ENCODE measurements at regions of chr16 and their contacts with region 1.

Region 1: DNA sequence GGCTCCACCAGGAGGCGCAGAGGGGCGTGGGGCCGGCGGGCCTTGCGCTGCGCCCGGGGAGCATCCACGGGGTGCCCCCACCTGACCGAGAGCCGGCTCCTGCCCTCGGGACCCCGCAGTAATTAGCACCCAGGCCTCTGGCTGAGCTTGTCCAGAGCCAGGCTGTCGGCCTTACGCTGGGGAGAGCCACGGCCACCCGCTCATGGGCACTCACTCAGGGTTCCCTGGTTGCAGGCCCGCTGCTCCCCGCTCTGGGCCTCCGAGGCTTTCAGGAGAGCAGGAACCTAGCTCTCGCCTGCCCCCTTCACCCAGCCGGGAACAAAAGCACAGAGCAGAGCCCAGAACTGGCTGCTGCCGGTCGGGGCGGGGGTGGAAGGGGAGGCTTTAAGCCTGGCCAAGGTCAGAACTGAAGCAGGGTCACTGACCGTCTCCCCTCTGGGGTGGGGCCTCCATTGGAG is 12.2 kb downstream of the GLIS2 start:
- DNase-seq: peak; percentile 78 to 92
- H3K4me3 ChIP-seq: peak overlapping the region; percentile 48 to 58
- H3K27ac ChIP-seq: peak overlapping the region; percentile 76 to 99
- H3K4me1 ChIP-seq: peaks cover 8 to 79% (median 69%) of the 10 kb centered on the region in 4 donors
- H3K27me3 ChIP-seq: no peaks in the 10 kb centered on the region
- CTCF ChIP-seq: peak; percentile 67 to 69

Region 2: DNA sequence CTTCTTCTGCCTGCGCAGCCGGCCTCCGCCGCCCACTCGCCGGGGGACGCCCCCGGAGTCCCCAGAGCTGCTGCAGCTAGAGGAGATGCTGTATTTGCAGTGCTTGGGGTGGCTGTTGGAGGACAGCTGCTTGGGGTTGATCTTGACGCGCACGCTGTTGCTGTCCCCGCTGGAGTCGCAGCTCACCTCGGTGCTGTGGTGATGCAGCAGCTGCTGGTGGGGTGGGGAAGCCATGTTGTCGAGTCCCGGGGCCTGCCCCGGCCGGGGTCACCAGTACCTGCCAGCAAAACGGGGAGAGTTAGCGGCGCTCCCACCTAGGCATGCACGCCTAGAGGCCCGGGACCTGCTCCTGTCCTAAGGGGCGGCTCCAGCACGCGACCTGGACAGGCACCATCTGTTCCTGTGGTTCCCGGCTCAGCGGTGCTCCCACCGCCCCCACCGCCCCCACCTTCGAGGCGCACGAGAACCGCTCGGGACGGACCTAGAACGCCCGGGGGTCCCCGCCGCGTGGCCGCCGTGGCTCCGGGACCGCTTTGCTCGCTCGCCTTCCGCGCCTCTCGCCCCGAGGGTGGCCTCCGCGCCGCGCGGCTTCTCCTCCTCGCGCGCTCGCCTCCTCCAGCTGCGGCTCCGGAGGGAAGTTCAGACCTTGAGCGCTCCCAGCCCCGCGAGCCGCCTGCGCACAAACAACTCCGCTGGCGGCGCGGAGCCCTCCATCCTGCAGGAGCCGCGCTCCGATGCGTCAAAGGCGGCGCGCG is 212.7 kb before region 1 on chr16:
- intact Hi-C with region 1: no loop called
- DNase-seq: peak; percentile 49 to 76
- H3K4me3 ChIP-seq: peak overlapping the region; percentile 68 to 72
- H3K27ac ChIP-seq: peak overlapping the region; percentile 70 to 78
- H3K4me1 ChIP-seq: peaks cover 0 to 46% (median 33%) of the 10 kb centered on the region in 4 donors
- H3K27me3 ChIP-seq: no peaks in the 10 kb centered on the region
- CTCF ChIP-seq: no peak

Region 3: DNA sequence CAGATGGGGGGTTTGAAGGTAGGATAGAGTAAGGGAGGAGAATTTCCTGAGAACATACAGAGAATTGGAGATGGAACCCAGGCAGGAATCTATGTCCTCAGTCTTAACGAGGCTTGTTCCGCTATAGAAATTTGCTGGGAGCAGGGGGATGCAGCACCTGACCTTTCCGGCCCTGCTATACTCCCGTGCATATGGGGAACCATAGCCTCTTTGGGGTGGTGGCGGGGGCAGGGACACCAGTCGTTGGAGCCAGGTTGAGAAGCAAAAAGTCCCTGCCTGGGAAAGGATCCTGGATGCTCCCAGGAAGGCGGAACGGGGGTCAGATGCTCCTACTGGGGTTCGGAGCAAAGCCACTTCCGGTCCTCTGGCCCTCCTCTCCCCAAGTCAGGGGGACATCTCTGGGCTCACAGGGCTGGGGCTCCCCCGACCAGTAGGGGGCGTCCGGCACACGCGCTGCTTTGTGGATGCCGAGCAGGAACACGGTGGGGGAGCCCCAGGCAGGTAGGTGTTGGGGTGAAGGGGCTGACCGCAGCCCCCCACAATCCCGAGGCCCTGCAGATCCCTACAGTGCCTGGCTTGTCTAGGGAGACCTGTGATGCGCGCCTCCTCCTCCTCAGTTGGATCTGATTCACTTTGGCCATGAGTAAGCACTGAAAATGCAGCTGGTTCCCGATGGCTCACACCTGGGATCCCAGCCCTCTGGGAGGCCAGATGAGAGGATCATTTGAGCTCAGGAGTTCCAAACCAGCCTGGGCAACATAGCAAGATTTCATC is 39.7 kb before region 1 on chr16:
- intact Hi-C with region 1: loop called (anchors 2 kb)
- DNase-seq: peak; percentile 62 to 84
- H3K4me3 ChIP-seq: no peak overlapping the region
- H3K27ac ChIP-seq: no peak overlapping the region
- H3K4me1 ChIP-seq: peaks cover 0 to 47% (median 28%) of the 10 kb centered on the region in 4 donors
- H3K27me3 ChIP-seq: no peaks in the 10 kb centered on the region
- CTCF ChIP-seq: peak; percentile 88 to 94

Region 4: GRCh38 chr16:4435337-4436067 is 107.4 kb after region 1 on chr16:
- intact Hi-C with region 1: no loop called
- DNase-seq: no peak
- H3K4me3 ChIP-seq: no peak overlapping the region
- H3K27ac ChIP-seq: no peak overlapping the region
- H3K4me1 ChIP-seq: no peaks in the 10 kb centered on the region
- H3K27me3 ChIP-seq: no peaks in the 10 kb centered on the region
- CTCF ChIP-seq: no peak

Region 5: DNA sequence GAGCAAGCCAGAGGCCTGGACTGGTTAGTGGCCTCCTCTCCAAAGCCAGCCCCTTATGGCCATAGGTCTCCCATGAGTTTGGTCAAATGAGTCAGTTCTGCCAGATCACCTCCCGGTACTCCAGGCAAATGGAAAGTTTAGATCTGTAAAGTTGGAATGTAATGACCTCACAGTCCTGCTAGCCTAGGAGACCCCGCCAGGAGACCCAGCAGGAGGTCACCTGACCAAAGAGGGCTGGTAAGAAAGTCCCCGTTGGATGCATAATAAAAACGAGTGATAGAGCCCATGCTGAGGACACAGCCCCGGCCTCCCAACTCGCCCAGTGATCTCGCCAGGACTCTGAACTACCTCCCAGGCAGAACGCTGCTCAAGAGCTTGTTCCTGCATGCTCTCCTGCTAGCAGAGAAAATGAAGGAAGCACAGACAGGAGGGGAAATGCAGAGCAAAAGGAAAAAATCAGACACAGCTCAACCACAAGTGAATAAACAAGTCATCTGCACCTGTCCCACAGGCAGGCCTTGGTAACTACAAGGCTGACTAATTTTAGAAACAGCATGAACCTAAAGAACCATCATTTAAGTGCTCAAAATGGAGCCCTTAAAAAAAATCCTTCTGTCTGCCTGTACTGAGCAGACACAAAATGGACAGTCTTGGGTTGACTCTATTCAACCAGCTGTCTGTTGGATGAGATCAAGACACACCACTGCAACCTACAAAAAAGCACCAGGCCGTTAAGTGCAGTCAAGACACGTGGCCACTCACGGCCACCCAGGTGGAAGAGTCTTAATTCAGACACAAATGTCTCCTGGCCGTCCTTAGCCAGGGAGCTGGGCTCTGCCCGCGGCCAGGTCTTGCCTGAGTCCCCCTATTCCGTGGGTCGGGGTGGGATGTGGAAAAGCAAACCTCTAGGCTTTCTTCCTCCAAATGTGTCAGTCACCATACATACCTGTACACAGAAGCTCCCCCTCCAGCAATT is 201.3 kb after region 1 on chr16:
- intact Hi-C with region 1: no loop called
- DNase-seq: no peak
- H3K4me3 ChIP-seq: no peak overlapping the region
- H3K27ac ChIP-seq: no peak overlapping the region
- H3K4me1 ChIP-seq: peaks cover 0 to 6% (median 2%) of the 10 kb centered on the region in 4 donors
- H3K27me3 ChIP-seq: no peaks in the 10 kb centered on the region
- CTCF ChIP-seq: no peak